ENCODE measurements at regions of chr5 and their contacts with region 1.

Region 1: GRCh38 chr5:59367791-59368394 is 525.6 kb downstream of the PDE4D start:
- DNase-seq: peak; percentile 33
- ATAC-seq: no peak
- H3K4me3 ChIP-seq: no peak overlapping the region
- H3K27ac ChIP-seq: no peak overlapping the region
- H3K4me1 ChIP-seq: no peaks in the 10 kb centered on the region
- H3K27me3 ChIP-seq: no peaks in the 10 kb centered on the region
- CTCF ChIP-seq: peak; percentile 50

Region 2: DNA sequence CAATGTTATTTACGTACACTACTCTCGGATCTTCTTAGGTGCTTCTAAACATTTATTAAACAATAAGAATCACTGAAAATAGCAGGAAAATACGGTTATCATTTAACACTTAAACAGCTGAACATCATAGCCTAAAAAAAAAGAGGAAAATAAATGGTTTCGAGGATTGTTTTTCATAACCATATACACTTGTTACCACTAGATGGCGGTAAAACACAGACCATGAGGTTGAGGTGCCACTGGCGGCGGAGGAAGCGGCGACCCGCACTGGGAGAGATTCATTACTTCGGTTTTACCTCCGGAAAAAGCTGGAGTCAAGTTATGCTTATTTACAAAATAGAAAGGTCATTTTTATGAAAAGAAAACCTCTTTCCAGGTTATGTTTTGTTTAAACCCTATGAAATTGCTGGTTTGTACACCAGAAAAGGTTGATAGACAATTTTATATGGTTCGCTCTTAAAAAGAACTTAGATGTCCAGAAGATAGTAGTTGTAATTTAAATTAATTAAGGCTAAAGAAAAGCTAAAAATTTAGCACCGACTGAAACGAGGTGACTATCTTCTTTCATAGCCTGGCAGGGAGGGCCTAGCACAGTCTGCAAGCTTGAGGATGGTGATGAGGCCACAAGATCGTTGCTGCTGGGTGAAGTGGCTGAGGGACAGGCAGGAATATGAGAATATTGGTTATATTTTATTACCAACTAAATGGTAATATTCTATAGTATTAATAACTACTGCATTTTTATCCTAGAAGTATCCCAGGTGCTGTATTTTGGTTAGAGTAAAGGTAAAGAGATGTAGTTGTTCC is 179.3 kb before region 1 on chr5:
- CTCF ChIA-PET with region 1: interaction called, 4 read pairs
- POLR2A ChIA-PET with region 1: no interaction called
- intact Hi-C with region 1: loop called (anchors 1 kb)
- DNase-seq: peak; percentile 28
- ATAC-seq: peak; percentile 48; the same call in 1 of the 2 replicates
- H3K4me3 ChIP-seq: no peak overlapping the region
- H3K27ac ChIP-seq: no peak overlapping the region
- H3K4me1 ChIP-seq: peaks cover 3% of the 10 kb centered on the region; the same call in 1 of the 2 replicates
- H3K27me3 ChIP-seq: no peaks in the 10 kb centered on the region
- CTCF ChIP-seq: peak; percentile 40; the same call in 1 of the 2 replicates

Region 3: DNA sequence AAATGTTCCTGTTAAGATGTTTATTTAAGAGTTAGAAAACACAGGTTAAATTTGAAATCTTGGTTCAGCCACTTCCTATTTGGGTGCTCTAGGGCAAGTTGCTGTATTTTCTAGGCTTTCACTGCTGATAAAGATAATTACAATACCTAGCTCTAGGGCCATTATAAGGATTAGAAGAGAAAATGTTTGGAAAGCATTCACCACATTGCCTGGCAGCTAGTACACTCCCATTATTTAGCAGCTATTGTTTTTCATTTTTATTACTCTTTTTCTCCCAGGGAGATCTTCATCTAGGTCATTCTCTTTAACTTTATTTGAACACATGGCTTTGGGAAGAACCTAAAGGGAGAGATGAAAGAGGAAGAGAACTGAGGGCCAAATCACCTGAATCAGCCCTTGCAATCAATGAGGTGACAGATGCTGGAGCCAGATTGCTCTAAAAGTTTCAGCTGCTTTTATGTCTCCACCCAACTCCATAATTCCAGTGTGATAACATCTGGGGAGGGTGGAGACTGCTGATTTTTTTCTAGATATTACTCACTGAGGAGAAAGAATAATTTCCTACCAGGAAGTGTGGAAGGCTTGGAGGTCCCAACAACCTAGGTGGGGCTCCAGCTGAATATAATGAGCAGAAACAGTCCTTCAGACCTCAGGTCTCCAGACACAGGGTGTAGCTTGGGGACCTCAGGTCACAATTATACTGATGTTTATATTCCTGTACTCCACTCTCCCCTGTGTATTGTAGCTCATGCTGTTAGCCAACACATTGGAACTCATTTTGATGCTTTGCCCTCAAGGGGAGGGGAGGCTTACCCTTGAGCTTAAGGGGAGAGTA is 145.0 kb before region 1 on chr5:
- CTCF ChIA-PET with region 1: no interaction called
- POLR2A ChIA-PET with region 1: no interaction called
- intact Hi-C with region 1: loop called (anchors 10 kb)
- DNase-seq: no peak
- ATAC-seq: no peak
- H3K4me3 ChIP-seq: no peak overlapping the region
- H3K27ac ChIP-seq: no peak overlapping the region
- H3K4me1 ChIP-seq: no peaks in the 10 kb centered on the region
- H3K27me3 ChIP-seq: no peaks in the 10 kb centered on the region
- CTCF ChIP-seq: no peak

Region 4: DNA sequence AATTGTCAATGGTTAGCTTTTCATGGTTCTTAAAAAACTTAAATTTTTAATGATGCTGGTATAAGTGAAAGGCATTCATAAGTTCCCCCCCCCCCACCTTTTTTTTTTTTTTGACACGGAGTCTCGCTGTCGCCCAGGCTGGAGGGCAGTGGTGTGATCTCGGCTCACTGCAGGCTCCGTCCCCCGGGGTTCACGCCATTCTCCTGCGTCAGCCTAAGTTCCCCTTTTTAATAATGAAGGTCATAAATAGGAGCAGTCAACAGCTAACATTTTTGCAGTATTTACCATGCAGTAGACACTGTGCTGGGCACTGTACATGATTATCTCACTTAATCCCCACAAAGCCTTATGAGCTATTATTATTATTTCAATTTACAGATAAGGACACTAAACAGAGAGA is 30.7 kb before region 1 on chr5:
- CTCF ChIA-PET with region 1: interaction called, 11 read pairs
- POLR2A ChIA-PET with region 1: no interaction called
- intact Hi-C with region 1: no loop called
- DNase-seq: no peak
- ATAC-seq: no peak
- H3K4me3 ChIP-seq: no peak overlapping the region
- H3K27ac ChIP-seq: no peak overlapping the region
- H3K4me1 ChIP-seq: no peaks in the 10 kb centered on the region
- H3K27me3 ChIP-seq: no peaks in the 10 kb centered on the region
- CTCF ChIP-seq: no peak

Measured in PC-3 (cell line).